Activated T-helper 1 cell treated with anti-CD3 and anti-CD28 coated beads, Interleukin-12 subunit alpha, Interleukin-12 subunit beta, Interleukin-2, Interleukin-4 antibody, amounts not matched to agents 30 ng/mL and 10 ng/mL and 1 ng/mL, durations not matched to agents 14 hours and 24 hours and 36 hours (primary cell): ENCODE measurements at regions of chr12 and their contacts with region 1.

Region 1: DNA sequence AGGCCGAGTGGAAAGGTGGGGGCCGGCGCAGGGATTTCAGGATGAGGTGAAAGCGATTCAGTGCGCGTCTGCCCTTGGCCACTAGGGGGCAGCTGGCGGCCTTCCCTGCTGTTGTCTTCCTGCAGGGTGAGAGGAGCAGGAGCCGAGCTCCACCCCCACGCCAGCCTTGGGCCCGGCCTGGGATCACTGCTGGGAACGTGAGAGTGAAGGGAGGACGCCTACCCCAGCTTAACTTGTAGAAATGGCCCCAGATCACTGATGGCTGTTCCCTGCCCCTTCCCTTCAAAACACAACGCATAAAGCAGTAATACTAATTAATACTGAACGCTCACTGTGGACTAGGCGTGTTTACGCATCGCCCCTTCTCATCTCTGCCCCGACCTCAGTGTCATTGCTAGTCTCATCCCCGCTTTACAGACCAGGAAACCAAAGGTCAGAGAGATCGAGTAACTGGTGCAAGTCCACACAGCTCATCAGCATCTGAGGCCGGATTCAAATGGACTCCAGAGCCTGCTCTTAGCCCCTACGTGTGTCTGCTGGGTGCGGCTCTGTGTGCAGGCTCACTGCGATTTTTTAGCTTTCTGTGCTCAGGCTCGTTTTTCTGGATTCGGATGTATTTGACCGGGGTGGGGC is 24.3 kb downstream of the MVK start:
- DNase-seq: peak; percentile 32
- H3K4me3 Mint-ChIP-seq: no peak overlapping the region
- H3K27ac Mint-ChIP-seq: no peak overlapping the region
- H3K4me1 Mint-ChIP-seq: peaks cover 16% of the 10 kb centered on the region
- H3K27me3 Mint-ChIP-seq: peaks cover 8% of the 10 kb centered on the region

Region 2: DNA sequence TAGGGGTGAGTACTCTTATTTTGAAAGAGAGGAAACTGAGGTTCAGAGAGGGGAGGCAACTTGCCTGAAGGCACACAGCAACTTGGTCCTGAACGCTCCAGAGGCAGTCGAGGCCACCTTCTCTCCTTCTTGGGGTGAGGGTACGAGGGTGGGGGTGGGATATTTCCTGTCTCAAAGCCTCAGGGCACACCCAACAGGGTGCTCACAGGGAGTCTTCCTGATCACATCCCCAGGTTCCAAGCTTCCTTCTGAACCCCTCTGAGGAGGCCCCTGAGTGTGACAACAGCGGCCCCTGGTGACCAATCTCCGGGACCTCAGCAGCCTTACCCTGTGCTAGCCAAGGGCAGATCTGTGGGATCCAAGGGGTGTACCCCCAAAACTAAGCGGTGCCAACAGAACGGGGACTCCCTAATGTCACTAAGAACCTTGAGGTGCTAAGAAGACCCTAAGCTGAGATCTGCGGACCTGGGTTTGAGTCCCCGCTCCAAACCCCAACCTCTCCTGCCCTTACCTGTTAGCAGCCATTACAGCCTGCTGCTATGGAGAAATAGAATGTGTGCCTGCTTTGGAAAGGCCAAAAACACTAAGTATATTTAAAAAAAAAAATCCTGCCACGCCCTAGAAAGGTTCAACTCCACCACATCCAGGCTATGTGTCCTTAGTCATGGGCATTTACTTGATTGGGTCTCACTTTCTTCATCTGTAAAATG is 177.4 kb after region 1 on chr12:
- intact Hi-C with region 1: loop called (anchors 1 kb)
- DNase-seq: peak; percentile 46
- H3K4me3 Mint-ChIP-seq: no peak overlapping the region
- H3K27ac Mint-ChIP-seq: no peak overlapping the region
- H3K4me1 Mint-ChIP-seq: peaks cover 5% of the 10 kb centered on the region
- H3K27me3 Mint-ChIP-seq: peaks cover 8% of the 10 kb centered on the region

Region 3: DNA sequence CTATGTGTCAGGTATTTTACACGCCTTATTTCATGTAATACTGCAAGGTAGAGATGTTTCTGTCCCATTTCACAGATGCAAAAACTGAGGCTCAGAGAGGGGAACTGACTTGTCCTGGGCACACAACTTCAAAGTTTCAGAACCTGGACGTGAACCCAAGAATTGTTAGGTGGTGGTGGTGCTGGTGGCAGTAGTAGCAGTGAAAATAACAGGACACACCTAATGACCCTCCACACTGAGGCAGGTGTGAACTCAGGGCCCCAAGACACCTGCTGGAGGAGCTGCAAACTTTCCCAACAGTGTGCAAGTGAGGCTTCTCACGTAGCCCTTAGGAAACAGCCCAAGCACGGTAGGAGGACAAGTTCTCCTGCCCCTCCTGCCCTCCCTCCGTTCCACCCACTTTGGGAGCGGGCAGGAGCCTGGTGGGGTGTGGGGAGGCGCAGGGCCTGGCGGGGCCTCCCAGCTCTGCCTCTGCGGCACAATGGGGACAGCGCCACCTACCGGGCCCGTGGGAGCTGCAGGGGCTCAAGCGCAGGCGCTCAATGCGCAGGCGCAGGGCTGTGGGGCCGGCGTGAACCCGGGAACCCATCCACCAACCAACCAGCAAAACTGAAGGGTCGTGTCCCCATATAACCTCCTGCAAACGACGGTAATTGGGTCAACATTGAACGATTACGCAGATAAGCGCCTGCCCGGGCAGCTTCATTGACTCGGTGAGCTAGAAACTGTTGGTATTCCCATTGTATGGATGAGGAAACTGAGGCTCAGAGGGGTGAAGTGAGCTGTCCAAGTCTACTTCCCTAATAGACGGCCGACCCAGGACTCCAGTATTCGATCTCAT is 247.3 kb after region 1 on chr12:
- intact Hi-C with region 1: loop called (anchors 5 kb)
- DNase-seq: peak; percentile 85
- H3K4me3 Mint-ChIP-seq: peak overlapping the region; percentile 37
- H3K27ac Mint-ChIP-seq: no peak overlapping the region
- H3K4me1 Mint-ChIP-seq: peaks cover 5% of the 10 kb centered on the region
- H3K27me3 Mint-ChIP-seq: no peaks in the 10 kb centered on the region